Uterus (tissue), 4 donors: ENCODE measurements at regions of chr17 and their contacts with region 1.

Region 1: DNA sequence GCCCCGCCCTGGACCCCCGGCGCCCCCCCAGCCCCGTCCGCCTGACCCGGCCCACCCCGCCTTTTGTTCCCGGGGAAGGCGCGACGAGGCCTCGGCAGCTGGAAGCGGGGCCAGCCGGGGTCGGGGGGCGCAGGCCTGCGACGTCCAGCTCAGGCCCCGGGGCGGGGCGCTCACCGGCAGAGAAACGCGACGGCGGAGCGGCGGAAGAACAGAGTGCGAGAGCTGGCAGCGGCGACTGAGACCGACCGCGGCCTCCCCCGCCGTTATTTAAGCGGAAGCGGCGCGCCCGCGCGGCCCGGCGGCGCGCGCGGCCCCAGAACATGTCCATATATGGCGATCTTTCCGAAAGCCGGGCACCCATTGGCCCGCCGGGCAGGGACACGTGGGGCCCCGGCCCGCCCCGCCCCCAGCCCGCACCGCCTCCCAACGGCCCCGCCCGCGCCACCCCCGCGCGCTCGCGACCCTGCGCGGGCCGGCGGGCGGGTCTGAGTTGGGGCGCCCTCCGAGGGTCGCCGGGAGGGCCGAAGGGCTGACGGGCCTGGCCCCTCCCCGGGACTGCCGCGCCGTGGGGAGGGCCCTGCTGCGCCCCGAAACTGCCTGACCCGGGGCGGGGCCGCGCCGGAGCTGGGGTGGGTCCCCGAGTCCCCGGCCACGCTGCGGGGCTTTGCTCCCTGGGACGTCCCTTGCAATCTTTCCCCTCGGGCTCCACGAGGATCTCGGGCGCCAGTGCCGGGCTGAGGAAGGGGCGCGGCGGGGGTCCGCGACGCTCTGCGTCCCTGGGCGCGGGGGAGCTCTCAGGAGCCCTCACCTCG is at the start of gene ACTG1:
- DNase-seq: peak; percentile 94 to 96
- H3K4me3 ChIP-seq: peak within 1 kb of the TSS; percentile 77 to 98
- H3K27ac ChIP-seq: peak within 1 kb of the TSS; percentile 97 to 100
- H3K4me1 ChIP-seq: peaks cover 3 to 9% of the 10 kb centered on the region in 2 donors
- H3K27me3 ChIP-seq: no peaks in the 10 kb centered on the region
- CTCF ChIP-seq: no peak
- POLR2A ChIP-seq: peak; percentile 91 to 98
- total RNA-seq, gene ACTG1: 1,023 to 5,472 (median 2,159) TPM

Region 2: GRCh38 chr17:81272616-81273015 is 240.2 kb before region 1 on chr17:
- intact Hi-C with region 1: no loop called
- DNase-seq: no peak
- H3K4me3 ChIP-seq: no peak overlapping the region
- H3K27ac ChIP-seq: no peak overlapping the region
- H3K4me1 ChIP-seq: no peaks in the 10 kb centered on the region
- H3K27me3 ChIP-seq: no peaks in the 10 kb centered on the region
- CTCF ChIP-seq: no peak
- POLR2A ChIP-seq: no peak

Region 3: DNA sequence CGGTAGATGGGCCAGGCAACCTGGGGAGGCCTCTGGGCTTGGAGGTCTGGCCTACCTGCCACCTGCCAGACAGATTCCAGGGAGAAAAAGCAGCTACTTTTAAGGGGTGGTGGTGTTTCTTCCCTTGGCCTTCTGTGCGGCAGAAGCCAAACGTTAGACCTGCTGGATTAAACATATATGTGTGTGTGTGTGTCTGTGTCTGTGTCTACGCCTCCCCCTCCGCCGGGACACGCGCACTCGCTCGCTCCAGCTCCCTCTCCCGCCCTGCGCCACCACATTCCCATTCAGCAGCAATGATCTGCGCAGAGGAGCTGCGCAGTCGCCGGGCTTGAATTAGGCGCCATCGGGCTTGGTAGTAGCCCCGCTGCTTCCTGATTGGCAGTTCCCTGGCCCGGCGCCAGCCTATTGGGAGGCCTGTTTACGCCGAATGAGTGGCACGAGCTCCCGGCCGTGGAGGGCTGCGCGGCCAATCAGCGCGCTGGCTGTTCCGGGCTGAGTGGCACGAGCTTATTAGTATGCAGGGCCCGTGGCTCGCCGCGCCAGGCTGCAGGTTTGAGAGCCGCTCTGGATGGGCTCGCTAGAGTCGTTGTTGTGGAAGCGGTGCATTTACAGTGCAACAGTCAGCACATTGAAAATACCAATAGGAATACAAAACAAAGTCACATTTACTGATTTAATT is 117.7 kb before region 1 on chr17 and contains the start of gene BAHCC1:
- intact Hi-C with region 1: loop called (anchors 5 kb)
- DNase-seq: peak; percentile 100
- H3K4me3 ChIP-seq: peak within 1 kb of the TSS; percentile 52 to 63
- H3K27ac ChIP-seq: peak within 1 kb of the TSS; percentile 97
- H3K4me1 ChIP-seq: peaks cover 0 to 10% of the 10 kb centered on the region in 2 donors
- H3K27me3 ChIP-seq: no peaks in the 10 kb centered on the region
- CTCF ChIP-seq: peak in 1 of 4 experiments; percentile 7
- POLR2A ChIP-seq: peak; percentile 95 to 96
- total RNA-seq, gene BAHCC1: 1.5 to 34.1 (median 8.5) TPM